Heart right ventricle (tissue), 16 donors: ENCODE measurements at regions of chr17 and their contacts with region 1.

Region 1: DNA sequence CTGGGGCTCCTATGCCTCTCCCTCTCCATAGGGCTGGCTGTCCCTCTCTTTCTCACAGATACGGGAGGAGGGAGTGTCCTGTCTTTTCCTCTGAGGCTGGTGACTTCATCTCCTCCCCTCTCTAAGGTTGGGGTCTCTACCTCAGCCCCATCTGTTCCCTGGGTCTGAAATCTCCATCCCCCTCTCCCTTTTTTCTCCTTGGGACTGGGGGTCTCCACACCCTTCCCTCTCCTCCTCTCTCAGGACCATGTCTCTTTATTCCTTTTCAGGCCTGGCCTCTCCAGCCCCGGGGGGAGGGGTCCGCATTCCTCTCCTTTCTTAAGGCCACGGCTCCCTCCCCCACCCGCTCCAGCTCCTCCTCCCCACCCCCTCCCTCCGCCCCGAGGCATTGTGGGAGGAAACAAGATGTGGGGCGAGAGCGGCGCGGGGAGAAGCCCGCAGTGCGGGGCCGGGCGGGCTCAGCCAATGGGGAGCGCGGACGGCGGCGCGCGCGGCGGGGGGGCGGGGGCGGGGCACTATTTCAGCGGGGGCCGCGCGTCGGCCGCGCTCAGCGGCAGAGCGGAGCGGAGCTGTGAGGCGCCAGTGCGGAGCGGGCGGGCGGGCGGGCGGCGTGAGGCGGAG is at the start of gene DYNLL2:
- DNase-seq: peak; percentile 92 to 95
- ATAC-seq: peak; percentile 92 to 95 (median 93)
- H3K4me3 ChIP-seq: peak within 1 kb of the TSS; percentile 87 to 100 (median 97)
- H3K27ac ChIP-seq: peak within 1 kb of the TSS; percentile 84 to 99 (median 98)
- H3K4me1 ChIP-seq: peaks cover 3 to 46% (median 38%) of the 10 kb centered on the region in 9 donors
- H3K27me3 ChIP-seq: peaks cover 0 to 5% (median 0%) of the 10 kb centered on the region in 7 donors
- CTCF ChIP-seq: no peak
- total RNA-seq, gene DYNLL2: 73.4 to 105 (median 83.5) TPM

Region 2: GRCh38 chr17:57849874-57850754 is 232.9 kb before region 1 on chr17 and contains the start of gene MRPS23:
- intact Hi-C with region 1: loop called in 4 of 10 experiments (anchors 10 kb)
- DNase-seq: peak; percentile 97 to 98
- ATAC-seq: peak; percentile 85 to 94 (median 90)
- H3K4me3 ChIP-seq: peak within 1 kb of the TSS; percentile 53 to 94 (median 87)
- H3K27ac ChIP-seq: peak within 1 kb of the TSS; percentile 86 to 98 (median 90)
- H3K4me1 ChIP-seq: peaks cover 13 to 66% (median 47%) of the 10 kb centered on the region in 9 donors
- H3K27me3 ChIP-seq: no peaks in the 10 kb centered on the region
- CTCF ChIP-seq: peak in 1 of 9 donors; percentile 6
- total RNA-seq, gene MRPS23: 61.2 to 103 (median 75.5) TPM

Region 3: GRCh38 chr17:57868007-57868909 is 214.7 kb before region 1 on chr17:
- intact Hi-C with region 1: loop called in 2 of 10 experiments (anchors 10 kb)
- DNase-seq: peak; percentile 73 to 79
- ATAC-seq: peak; percentile 67 to 89 (median 84)
- H3K4me3 ChIP-seq: no peak overlapping the region
- H3K27ac ChIP-seq: peak overlapping the region; percentile 28 to 83 (median 71)
- H3K4me1 ChIP-seq: peaks cover 15 to 50% (median 36%) of the 10 kb centered on the region in 9 donors
- H3K27me3 ChIP-seq: no peaks in the 10 kb centered on the region
- CTCF ChIP-seq: peak in 8 of 9 donors; percentile 24 to 58 (median 42)

Region 4: GRCh38 chr17:58006924-58007780 is 75.8 kb before region 1 on chr17 and contains the start of gene SRSF1:
- intact Hi-C with region 1: loop called in 9 of 10 experiments (anchors 1 to 10 kb)
- DNase-seq: peak; percentile 97 to 98
- ATAC-seq: peak; percentile 95 to 98 (median 97)
- H3K4me3 ChIP-seq: peak within 1 kb of the TSS; percentile 65 to 98 (median 77)
- H3K27ac ChIP-seq: peak within 1 kb of the TSS; percentile 93 to 100 (median 98)
- H3K4me1 ChIP-seq: peaks cover 17 to 49% (median 46%) of the 10 kb centered on the region in 9 donors
- H3K27me3 ChIP-seq: no peaks in the 10 kb centered on the region
- CTCF ChIP-seq: no peak
- total RNA-seq, gene SRSF1: 79.8 to 130 (median 94.7) TPM

Region 5: DNA sequence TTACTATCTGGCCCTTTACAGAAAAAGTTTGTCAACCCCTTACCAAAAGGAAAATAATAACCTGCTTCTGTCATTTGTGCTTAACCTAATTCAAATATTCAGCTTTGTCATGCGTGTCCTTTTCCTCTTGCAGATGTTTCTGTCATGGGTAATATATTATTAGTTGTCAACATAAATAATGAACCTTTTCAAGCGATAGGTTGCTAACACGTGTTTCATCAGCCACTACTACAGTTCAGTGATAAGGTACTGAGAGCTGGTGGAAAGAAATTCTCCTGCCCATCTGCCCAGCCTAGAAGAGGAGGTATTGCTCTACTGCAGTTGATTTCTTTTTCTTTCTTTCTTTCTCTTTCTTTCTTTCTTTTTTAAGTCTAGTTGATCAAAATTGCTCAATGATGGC is 63.9 kb before region 1 on chr17:
- intact Hi-C with region 1: loop called in 1 of 10 experiments (anchors 10 kb)
- DNase-seq: no peak
- ATAC-seq: no peak
- H3K4me3 ChIP-seq: no peak overlapping the region
- H3K27ac ChIP-seq: no peak overlapping the region
- H3K4me1 ChIP-seq: no peaks in the 10 kb centered on the region
- H3K27me3 ChIP-seq: peaks cover 0 to 21% (median 4%) of the 10 kb centered on the region in 7 donors
- CTCF ChIP-seq: no peak

Region 6: GRCh38 chr17:58870753-58871152 is 787.8 kb after region 1 on chr17:
- intact Hi-C with region 1: no loop called
- DNase-seq: no peak
- ATAC-seq: no peak
- H3K4me3 ChIP-seq: no peak overlapping the region
- H3K27ac ChIP-seq: no peak overlapping the region
- H3K4me1 ChIP-seq: no peaks in the 10 kb centered on the region
- H3K27me3 ChIP-seq: no peaks in the 10 kb centered on the region
- CTCF ChIP-seq: no peak